GM10248 (cell line): ENCODE measurements at regions of chrX and their contacts with region 1.

Region 1: DNA sequence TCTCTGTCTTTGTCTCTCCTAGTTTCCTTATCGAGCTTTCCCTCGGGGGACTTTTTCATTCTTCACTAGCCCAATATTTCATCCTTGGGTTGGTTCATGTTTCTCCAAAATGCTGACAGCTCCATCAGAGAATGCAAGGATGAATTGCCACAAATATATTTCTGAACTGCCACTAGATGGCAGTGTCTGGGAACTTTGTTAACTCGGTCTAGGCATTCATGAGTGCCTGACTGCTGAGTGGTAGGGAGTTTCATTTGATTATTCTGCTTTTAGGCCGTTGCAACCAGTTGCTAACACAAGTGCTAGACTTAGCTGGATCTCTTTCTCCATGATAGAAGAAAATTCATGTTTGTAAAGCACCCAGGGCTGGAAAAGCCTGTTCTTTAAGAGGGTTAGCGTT is 73.5 kb upstream of the RAP2C start:
- DNase-seq: peak; percentile 34
- CTCF ChIP-seq: peak; percentile 35

Region 2: DNA sequence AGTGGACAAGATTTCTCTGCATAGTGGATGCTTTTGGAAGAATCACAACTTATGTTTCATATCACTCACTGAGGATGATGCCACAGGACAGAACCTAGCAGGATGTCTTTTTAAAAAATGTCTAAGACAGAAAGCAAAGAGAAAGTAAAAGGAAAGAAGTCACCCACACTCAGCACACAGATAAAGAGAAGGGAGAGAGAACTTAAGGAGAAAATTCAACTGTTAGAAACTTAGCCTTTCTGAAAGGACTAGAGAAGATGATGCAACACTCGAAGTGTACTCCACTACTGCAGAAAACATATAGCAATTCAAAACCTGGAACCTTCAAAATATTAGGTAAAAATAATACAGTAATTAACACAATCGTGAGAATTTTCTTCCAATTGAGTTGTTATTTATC is 322.4 kb before region 1 on chrX:
- CTCF ChIA-PET with region 1: no interaction called
- POLR2A ChIA-PET with region 1: no interaction called
- DNase-seq: no peak
- CTCF ChIP-seq: no peak

Region 3: DNA sequence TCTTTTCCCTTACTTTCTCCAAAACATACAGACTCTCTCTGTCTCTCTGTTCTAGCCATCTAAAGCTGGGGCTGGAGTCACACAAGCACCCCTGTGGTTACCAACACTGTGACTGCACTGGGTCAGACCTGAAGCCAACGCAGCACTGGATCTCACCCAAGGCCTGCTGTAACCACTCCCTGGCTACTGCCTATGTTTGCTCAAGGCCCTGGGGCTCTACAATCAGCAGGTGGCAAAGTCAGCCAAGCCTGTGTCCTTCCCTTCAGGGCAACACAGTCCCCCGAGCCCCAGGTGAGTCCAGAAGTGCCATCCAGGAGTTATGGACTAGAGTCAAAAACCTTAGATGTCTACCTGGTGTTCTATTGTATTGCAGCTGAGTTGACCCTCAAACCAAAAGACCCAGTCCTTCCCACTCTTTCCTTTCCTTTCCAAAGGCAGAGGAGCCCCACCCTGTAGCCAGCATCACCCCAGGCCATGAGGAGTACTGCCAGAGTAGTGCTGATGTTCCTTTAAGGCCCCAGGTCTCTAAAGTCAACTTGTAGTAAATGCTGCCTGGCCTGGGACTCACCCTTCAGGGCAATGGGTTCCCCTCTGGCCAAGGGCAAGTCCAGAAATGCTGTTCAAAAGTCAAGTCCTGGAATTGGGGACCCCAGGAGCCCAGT is 14.7 kb before region 1 on chrX:
- CTCF ChIA-PET with region 1: interaction called, 13 read pairs
- POLR2A ChIA-PET with region 1: no interaction called
- DNase-seq: no peak
- CTCF ChIP-seq: no peak

Region 4: GRCh38 chrX:132415012-132415411 is 122.2 kb after region 1 on chrX:
- CTCF ChIA-PET with region 1: no interaction called
- POLR2A ChIA-PET with region 1: no interaction called
- DNase-seq: no peak
- CTCF ChIP-seq: no peak

Region 5: DNA sequence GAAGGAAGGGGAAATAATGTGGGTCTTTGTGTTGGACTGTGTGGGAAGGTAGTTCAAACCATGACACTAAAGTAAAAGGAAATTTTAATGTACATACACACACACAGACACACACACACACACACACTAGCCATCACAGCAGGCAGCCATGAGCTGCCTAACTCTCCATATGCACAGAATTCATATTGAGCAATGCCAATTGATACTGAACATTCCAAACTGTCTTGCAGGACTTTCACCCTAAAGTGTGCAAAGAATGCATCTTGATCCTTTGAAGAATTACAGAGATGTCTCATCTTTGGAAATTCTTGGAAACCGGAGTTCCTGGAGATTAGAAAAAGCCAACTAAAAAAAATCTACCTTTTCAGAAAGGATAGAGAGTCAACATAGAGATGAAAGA is 316.6 kb after region 1 on chrX:
- CTCF ChIA-PET with region 1: interaction called, 75 read pairs
- POLR2A ChIA-PET with region 1: no interaction called
- DNase-seq: no peak
- CTCF ChIP-seq: no peak

Region 6: GRCh38 chrX:132631579-132632232 is 338.9 kb after region 1 on chrX:
- CTCF ChIA-PET with region 1: interaction called, 10 read pairs
- POLR2A ChIA-PET with region 1: no interaction called
- DNase-seq: peak; percentile 15
- CTCF ChIP-seq: peak; percentile 38